ENCODE measurements at regions of chr3 and their contacts with region 1.

Region 1: DNA sequence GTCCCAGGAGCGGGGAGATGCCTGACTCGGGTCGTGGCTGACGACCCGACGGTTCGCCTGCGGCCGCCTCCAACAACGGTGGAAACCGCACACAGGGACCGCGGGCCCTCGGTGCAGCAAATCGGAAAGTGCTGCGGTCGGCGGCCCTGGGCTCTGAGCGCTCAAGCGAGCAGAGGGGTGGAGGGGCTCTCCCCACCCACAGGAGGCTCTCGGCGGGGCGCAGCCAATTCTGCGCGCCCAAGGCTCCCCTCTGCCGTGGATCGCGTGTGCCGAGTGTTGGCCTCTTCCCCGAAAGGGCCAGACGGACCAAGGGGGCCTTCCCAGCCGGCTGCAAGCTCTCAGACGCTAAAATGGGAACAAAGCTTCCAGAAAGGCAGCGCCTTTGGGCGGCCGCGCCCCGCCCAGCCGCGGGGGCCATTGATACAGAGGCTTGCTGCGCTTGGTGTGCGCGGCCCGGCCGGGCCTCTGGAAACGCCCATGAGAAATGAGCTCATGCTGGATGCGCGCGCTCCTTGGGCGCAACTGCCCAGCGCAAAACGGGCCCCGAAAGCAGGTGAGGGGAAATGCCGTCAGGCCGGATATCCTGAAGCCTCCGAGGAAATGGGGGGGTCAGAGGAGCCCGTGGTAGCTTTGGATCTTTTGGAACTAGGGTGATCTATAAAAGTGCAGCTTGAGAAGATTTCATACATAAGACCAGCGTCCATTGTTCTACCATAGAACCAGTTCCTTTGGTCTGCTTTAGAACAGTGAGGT is 1.2 kb upstream of the GSK3B start:
- DNase-seq: peak; percentile 73

Region 2: GRCh38 chr3:119550192-119550910 is 545.1 kb before region 1 on chr3:
- CTCF ChIA-PET with region 1: no interaction called
- POLR2A ChIA-PET with region 1: no interaction called
- DNase-seq: no peak

Region 3: GRCh38 chr3:119794971-119795612 is 300.3 kb before region 1 on chr3:
- CTCF ChIA-PET with region 1: no interaction called
- POLR2A ChIA-PET with region 1: no interaction called
- DNase-seq: no peak

Region 4: DNA sequence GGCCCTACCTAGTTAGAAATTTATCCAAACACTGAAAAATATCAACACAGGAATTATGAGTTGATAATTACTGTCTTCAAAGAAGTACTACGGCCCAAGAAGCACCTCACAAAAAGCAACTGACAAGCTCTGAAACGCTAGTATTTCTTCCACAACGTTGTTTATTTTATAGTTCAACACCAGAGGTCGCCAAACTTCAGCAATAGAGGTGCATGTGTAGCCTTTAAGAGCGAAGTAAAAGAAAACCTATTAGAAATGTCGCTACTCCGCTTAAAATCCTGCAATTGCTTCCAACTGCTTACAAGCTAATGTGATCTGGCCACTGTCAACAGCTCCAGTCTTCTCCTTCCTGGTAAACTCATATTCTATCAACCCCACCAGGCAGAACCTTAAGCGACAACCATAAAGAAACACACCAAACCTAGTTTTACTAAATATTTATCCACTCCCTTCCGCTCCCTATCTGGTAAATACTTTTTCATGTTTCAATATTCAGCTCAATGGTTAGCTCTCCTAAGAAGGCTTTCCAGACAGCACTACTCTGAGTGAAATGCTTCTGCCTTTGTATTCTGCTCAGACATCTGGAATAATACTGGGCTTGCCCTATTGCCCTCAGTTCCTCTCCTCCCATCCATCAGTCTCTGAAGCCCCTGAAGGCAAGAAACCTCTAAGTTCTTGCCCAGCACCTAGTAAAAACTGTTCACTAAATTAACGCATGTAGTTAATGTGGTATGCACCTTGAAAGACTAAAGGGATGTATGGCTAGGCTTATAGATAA is 203.3 kb before region 1 on chr3:
- CTCF ChIA-PET with region 1: interaction called, 4 read pairs
- POLR2A ChIA-PET with region 1: interaction called, 38 read pairs
- DNase-seq: peak; percentile 57

Region 5: GRCh38 chr3:120071259-120071658 is 24.1 kb before region 1 on chr3:
- CTCF ChIA-PET with region 1: no interaction called
- POLR2A ChIA-PET with region 1: interaction called, 13 read pairs
- DNase-seq: no peak

Region 6: GRCh38 chr3:120113128-120114116 is 18.0 kb after region 1 on chr3:
- CTCF ChIA-PET with region 1: interaction called, 3 read pairs
- POLR2A ChIA-PET with region 1: interaction called, 10 read pairs
- DNase-seq: no peak

Region 7: GRCh38 chr3:120160050-120160449 is 64.6 kb after region 1 on chr3:
- CTCF ChIA-PET with region 1: no interaction called
- POLR2A ChIA-PET with region 1: interaction called, 19 read pairs
- DNase-seq: no peak

Region 8: DNA sequence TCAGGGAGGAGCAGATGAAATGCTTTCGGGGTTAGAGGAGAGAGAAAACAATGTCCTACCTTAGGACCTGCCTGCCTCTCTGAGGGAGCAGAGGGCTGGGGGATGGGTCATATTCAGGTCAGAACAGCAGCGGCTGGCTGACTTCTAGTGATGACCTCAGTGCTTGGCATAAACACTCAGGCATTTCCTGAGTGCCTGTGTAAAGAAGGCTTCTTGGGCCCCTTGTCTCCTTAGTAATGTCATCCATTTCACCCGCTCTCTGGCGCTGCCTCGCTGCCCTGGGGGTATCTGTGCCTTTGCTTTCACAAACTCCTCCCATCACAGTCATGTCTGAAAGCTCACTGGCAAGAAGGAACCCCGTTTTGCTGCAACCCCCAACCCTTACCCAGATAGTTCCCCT is 81.7 kb after region 1 on chr3:
- CTCF ChIA-PET with region 1: no interaction called
- POLR2A ChIA-PET with region 1: interaction called, 45 read pairs
- DNase-seq: peak; percentile 21

Region 9: DNA sequence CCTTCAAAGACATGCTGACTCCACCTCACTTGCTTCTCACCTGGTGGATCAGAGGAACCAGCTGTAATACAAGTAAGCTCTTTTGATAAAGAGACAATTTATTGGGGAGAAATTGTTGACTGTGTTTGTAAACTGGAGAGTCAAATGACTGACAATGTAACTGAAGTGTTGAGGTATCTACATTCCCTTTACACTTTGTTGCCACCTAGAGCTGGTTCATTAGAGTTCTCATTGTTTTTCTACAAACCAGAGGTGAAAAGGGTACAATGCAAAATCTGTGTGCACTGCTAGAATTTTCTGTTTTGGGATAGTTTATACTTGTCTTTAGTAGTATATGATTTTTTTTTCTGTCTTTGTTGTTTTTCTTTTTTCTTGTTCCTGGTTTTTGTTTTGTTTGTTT is 262.4 kb after region 1 on chr3:
- CTCF ChIA-PET with region 1: no interaction called
- POLR2A ChIA-PET with region 1: no interaction called
- DNase-seq: no peak